ENCODE measurements at regions of chr20 and their contacts with region 1.

Region 1: GRCh38 chr20:7406671-7407070 is 533.6 kb downstream of the HAO1 start:
- DNase-seq: no peak
- H3K4me3 ChIP-seq: no peak overlapping the region
- H3K27ac ChIP-seq: no peak overlapping the region
- H3K4me1 ChIP-seq: no peaks in the 10 kb centered on the region
- H3K27me3 ChIP-seq: no peaks in the 10 kb centered on the region
- CTCF ChIP-seq: no peak
- POLR2A ChIP-seq: no peak

Region 2: GRCh38 chr20:7352165-7352564 is 54.5 kb before region 1 on chr20:
- intact Hi-C with region 1: no loop called
- DNase-seq: no peak
- H3K4me3 ChIP-seq: no peak overlapping the region
- H3K27ac ChIP-seq: no peak overlapping the region
- H3K4me1 ChIP-seq: no peaks in the 10 kb centered on the region
- H3K27me3 ChIP-seq: no peaks in the 10 kb centered on the region
- CTCF ChIP-seq: no peak
- POLR2A ChIP-seq: no peak

Region 3: DNA sequence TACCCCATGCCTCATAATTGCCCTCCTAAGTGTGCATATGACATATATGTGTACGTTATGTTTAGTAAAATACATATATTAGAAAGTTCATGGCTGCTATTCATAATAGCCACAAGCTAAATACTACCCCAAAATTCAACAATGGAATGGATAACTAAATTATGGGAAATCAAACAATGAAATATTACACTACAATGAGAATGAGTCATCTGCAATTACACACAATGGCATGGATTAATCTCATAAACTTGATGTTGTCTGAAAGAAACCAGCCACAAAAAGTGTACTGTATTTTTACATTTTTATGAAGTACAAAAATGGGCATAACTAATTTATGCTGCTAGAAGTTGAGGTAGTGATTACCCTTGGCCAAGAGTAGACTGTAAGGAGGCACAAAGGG is 56.6 kb after region 1 on chr20:
- intact Hi-C with region 1: loop called (anchors 10 kb)
- DNase-seq: no peak
- H3K4me3 ChIP-seq: no peak overlapping the region
- H3K27ac ChIP-seq: no peak overlapping the region
- H3K4me1 ChIP-seq: no peaks in the 10 kb centered on the region
- H3K27me3 ChIP-seq: no peaks in the 10 kb centered on the region
- CTCF ChIP-seq: no peak
- POLR2A ChIP-seq: no peak